Sciatic nerve (tissue), 2 donors: ENCODE measurements at regions of chrX and their contacts with region 1.

Region 1: DNA sequence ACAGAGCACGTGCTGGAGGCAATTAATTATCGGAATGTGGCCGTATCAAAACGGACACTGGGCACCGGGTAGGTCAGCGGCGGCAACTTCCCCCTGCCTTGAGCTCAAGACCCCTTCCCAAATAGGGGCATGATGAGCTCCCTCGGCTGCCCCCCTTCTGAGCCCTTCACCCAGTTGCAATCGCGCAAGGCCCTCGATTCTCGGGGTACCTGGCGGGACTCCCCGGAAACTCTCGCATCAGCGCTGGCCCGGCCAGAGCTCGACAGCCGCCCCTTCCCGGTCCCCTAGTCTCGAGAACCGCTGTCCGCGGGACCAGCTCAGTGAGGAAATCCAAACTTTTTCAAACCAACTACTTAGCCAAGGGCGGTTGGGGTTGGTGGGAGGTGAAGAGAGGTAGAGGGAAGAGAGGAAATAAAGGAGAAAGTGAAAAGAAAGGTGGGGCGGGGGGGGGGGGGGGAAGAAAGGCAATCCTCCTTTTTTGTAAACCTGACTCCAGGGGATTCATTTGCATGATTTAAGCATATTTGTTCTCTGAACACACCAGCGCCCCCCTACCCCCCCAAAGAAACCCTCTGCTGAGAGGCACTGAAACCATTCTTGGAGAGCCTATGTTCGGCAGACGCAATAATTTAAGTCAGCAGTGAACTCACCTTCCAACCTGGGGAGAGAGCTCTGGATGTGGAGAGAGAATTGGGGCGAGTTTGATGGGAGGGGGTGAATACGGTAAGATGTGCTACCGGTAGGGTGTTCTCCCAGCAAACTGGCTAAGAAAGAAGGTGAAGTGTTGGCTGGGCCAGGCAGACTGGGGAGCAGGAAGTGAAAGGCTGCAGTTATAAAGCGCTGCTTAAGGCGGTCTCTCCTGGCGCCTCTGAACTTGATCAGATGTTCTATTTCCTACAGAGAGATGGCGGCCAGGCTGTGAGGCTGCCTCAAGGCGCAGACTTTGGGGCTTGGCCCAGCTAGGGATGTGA is 2.0 kb upstream of the ZIC3 start:
- DNase-seq: no peak
- ATAC-seq: no peak

Region 2: GRCh38 chrX:137600769-137601168 is 36.8 kb after region 1 on chrX:
- intact Hi-C with region 1: no loop called
- DNase-seq: no peak
- ATAC-seq: no peak

Region 3: GRCh38 chrX:138037494-138037893 is 473.5 kb after region 1 on chrX:
- intact Hi-C with region 1: loop called (anchors 5 kb)
- DNase-seq: no peak
- ATAC-seq: no peak